Posterior vena cava (tissue), 2 donors: ENCODE measurements at regions of chr16 and their contacts with region 1.

Region 1: DNA sequence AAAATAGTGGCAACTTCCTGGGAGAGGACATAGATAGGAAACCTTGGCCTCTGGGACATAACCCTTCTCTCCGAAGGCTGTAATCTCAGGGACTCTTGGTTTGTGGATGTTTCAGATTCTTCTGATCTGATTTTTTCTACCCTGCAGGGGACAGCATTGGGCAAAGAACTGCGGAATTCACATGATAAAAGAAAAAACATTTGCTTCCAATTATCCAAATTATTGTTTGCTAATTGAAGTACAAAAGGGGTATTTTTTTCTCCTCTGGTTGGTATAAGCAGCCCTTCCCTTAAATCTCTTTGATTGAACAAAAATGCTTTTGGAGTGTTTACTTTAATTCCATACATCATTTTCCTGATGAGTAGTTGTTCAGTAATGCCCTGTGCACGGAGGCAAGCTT is 251.7 kb upstream of the IRX3 start:
- DNase-seq: no peak

Region 2: GRCh38 chr16:54554581-54554980 is 16.3 kb after region 1 on chr16:
- intact Hi-C with region 1: no loop called
- DNase-seq: no peak

Region 3: DNA sequence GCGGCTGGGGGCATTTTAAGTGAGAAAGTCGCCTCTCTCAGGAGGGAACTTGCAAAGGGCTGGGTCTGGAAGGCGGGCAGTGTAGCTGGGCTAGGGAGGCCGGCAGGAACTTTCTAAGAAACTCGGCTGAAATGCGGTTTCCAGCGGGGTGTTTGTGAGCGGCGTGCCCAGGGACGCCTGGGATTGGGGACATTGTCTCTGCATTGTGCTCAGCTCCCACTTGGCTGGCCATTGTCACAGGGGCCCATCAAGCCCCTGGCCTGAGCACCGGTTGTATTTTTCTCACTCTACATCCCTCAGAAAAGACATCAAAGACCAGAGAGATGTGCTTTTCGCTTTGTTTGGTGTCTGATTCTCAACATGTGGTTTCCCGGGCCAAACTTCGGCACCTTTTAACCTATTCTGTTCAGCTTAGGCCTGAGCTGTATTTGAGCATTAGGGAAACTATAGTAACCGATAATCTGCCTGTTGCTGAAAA is 39.4 kb after region 1 on chr16:
- intact Hi-C with region 1: no loop called
- DNase-seq: no peak

Region 4: DNA sequence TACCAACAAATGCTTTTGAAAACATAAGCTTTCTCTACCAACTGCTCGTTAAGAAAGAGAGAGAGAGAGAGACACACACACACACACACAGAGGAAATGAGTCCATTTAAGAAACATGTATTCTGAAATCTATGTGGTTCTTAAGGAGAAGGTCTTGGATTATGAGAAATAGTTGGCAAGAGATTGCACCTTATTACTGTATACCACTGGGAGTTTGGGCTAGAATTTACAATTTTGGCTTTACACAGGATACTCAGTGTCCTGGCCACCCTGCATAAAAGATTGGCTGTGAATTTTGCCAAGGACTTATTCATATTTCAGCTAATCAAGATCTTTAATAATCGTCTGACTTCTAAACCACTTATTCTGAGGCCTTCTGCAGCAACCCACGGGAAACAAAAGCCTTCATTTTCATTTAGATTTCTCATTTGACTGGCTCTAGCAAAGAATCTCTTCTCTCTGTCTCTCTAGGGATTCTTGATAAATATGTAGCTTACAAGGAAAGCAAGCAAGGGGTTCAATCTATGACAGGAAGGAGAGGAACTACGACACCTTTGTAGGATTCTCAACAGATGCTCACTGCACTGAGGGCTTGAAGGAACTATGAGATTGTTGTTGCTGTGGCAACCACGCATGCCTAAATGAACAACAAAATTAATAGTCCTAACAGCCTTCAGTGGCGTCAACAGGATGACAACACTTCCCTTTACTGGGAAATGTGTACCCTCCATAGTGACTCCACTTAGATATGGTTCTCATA is 1577.7 kb after region 1 on chr16:
- intact Hi-C with region 1: loop called in 1 of 2 experiments (anchors 5 kb)
- DNase-seq: no peak